ENCODE measurements at regions of chr19 and their contacts with region 1.

Region 1: GRCh38 chr19:38004521-38005223 is 97.7 kb downstream of the SIPA1L3 start:
- DNase-seq: peak; percentile 34
- ATAC-seq: peak; percentile 60
- H3K4me3 Mint-ChIP-seq: no peak overlapping the region
- H3K27ac Mint-ChIP-seq: no peak overlapping the region
- H3K4me1 Mint-ChIP-seq: peaks cover 39% of the 10 kb centered on the region
- H3K27me3 Mint-ChIP-seq: no peaks in the 10 kb centered on the region
- CTCF ChIP-seq: no peak

Region 2: GRCh38 chr19:37987356-37988332 is 17.0 kb before region 1 on chr19:
- CTCF ChIA-PET with region 1: interaction called, 5 read pairs
- POLR2A ChIA-PET with region 1: interaction called, 43 read pairs
- intact Hi-C with region 1: no loop called
- DNase-seq: no peak
- ATAC-seq: no peak
- H3K4me3 Mint-ChIP-seq: no peak overlapping the region
- H3K27ac Mint-ChIP-seq: peak overlapping the region; percentile 96
- H3K4me1 Mint-ChIP-seq: peaks cover 86% of the 10 kb centered on the region
- H3K27me3 Mint-ChIP-seq: no peaks in the 10 kb centered on the region
- CTCF ChIP-seq: no peak

Region 3: DNA sequence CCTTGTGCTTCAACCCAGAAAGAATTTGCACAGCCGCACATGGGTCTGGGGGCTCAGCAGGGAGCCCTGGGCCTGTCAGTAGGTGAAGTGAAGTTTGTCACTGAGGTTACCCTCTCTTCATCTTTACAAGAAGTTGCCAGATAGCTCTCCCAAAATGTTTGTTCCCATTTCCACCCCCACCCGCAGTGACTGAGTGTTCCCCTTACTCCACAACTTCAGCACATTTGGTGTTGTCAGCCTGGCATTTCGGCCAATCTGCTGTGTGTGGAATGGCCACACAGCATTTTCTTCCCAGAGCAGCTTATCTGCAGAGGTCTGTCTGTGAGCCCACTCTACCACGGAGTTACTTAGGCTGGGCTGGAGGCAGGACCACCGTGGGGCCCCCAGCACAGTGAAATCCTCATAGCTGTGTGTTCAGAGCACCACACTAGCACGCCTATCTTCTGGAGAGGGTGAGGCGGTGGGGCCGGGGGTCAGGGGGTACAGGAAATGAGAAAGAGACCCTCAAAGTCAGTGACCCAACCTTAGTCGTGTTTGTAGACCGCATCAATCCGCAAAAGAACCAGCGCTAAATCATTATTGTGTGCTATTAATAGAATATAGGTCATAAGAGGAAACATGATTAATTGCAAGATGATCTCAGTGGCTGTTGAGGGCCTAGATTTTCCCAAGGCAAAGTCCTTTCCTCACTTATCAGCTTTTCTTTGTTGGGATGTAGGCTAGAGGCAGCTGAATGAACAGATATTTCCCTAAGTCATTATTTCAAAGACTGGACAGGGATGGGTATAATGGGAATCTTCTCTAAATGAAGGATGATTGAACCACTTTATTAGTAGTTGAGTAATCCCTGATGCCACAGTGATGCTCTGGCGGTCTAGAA is 18.4 kb after region 1 on chr19:
- CTCF ChIA-PET with region 1: interaction called, 3 read pairs
- POLR2A ChIA-PET with region 1: interaction called, 14 read pairs
- intact Hi-C with region 1: loop called (anchors 2 kb)
- DNase-seq: no peak
- ATAC-seq: no peak
- H3K4me3 Mint-ChIP-seq: peak overlapping the region; percentile 21
- H3K27ac Mint-ChIP-seq: peak overlapping the region; percentile 79
- H3K4me1 Mint-ChIP-seq: peaks cover 93% of the 10 kb centered on the region
- H3K27me3 Mint-ChIP-seq: no peaks in the 10 kb centered on the region
- CTCF ChIP-seq: no peak

Measured in activated B cell treated with CpG ODN at 0.5 μM for 24 hours (primary cell).